Vagina (tissue), 2 donors: ENCODE measurements at regions of chr21 and their contacts with region 1.

Region 1: GRCh38 chr21:37563641-37564340 is 197.2 kb downstream of the DYRK1A start:
- DNase-seq: peak in 1 of 2 donors; percentile 95
- H3K4me3 ChIP-seq: peak overlapping the region; percentile 55 to 72
- H3K27ac ChIP-seq: peak overlapping the region; percentile 96
- H3K4me1 ChIP-seq: peaks cover 14% of the 10 kb centered on the region
- H3K27me3 ChIP-seq: no peaks in the 10 kb centered on the region
- CTCF ChIP-seq: peak in 1 of 3 experiments; percentile 27
- POLR2A ChIP-seq: peak in 1 of 2 donors; percentile 27

Region 2: GRCh38 chr21:37267269-37268184 is 296.3 kb before region 1 on chr21 and contains the start of gene VPS26C:
- intact Hi-C with region 1: loop called (anchors 10 kb)
- DNase-seq: peak; percentile 99
- H3K4me3 ChIP-seq: peak within 1 kb of the TSS; percentile 87 to 95
- H3K27ac ChIP-seq: peak within 1 kb of the TSS; percentile 97
- H3K4me1 ChIP-seq: peaks cover 43% of the 10 kb centered on the region
- H3K27me3 ChIP-seq: no peaks in the 10 kb centered on the region
- CTCF ChIP-seq: no peak
- POLR2A ChIP-seq: peak in 1 of 2 donors; percentile 58
- total RNA-seq, gene VPS26C: 49.6 TPM